ENCODE measurements at regions of chr2 and their contacts with region 1.

Region 1: GRCh38 chr2:224357098-224357901 is 44.6 kb downstream of the FAM124B start:
- DNase-seq: peak; percentile 76
- H3K4me3 ChIP-seq: no peak overlapping the region
- H3K27ac ChIP-seq: no peak overlapping the region
- H3K4me1 ChIP-seq: no peaks in the 10 kb centered on the region
- H3K27me3 ChIP-seq: no peaks in the 10 kb centered on the region
- CTCF ChIP-seq: peak; percentile 67

Region 2: GRCh38 chr2:224650815-224651439 is 293.6 kb after region 1 on chr2:
- intact Hi-C with region 1: loop called (anchors 2 kb)
- DNase-seq: peak; percentile 41
- H3K4me3 ChIP-seq: no peak overlapping the region
- H3K27ac ChIP-seq: no peak overlapping the region
- H3K4me1 ChIP-seq: no peaks in the 10 kb centered on the region
- H3K27me3 ChIP-seq: no peaks in the 10 kb centered on the region
- CTCF ChIP-seq: peak; percentile 72

Region 3: GRCh38 chr2:224778474-224778877 is 421.2 kb after region 1 on chr2:
- intact Hi-C with region 1: loop called (anchors 5 kb)
- DNase-seq: peak; percentile 74
- H3K4me3 ChIP-seq: no peak overlapping the region
- H3K27ac ChIP-seq: no peak overlapping the region
- H3K4me1 ChIP-seq: peaks cover 6% of the 10 kb centered on the region
- H3K27me3 ChIP-seq: no peaks in the 10 kb centered on the region
- CTCF ChIP-seq: peak; percentile 73

Region 4: GRCh38 chr2:225008935-225009334 is 651.6 kb after region 1 on chr2:
- intact Hi-C with region 1: loop called (anchors 5 kb)
- DNase-seq: peak; percentile 45
- H3K4me3 ChIP-seq: no peak overlapping the region
- H3K27ac ChIP-seq: no peak overlapping the region
- H3K4me1 ChIP-seq: no peaks in the 10 kb centered on the region
- H3K27me3 ChIP-seq: no peaks in the 10 kb centered on the region
- CTCF ChIP-seq: no peak